ENCODE measurements at regions of chrX and their contacts with region 1.

Region 1: GRCh38 chrX:69088171-69088938 is 76.9 kb downstream of the PJA1 start:
- DNase-seq: no peak
- ATAC-seq: no peak
- H3K4me3 ChIP-seq: no peak overlapping the region
- H3K27ac ChIP-seq: no peak overlapping the region
- H3K4me1 ChIP-seq: no peaks in the 10 kb centered on the region
- H3K27me3 ChIP-seq: no peaks in the 10 kb centered on the region; a peak in 2 of 5 replicates
- CTCF ChIP-seq: no peak
- EP300 ChIP-seq: no peak
- POLR2A ChIP-seq: no peak
- RAD21 ChIP-seq: no peak

Region 2: DNA sequence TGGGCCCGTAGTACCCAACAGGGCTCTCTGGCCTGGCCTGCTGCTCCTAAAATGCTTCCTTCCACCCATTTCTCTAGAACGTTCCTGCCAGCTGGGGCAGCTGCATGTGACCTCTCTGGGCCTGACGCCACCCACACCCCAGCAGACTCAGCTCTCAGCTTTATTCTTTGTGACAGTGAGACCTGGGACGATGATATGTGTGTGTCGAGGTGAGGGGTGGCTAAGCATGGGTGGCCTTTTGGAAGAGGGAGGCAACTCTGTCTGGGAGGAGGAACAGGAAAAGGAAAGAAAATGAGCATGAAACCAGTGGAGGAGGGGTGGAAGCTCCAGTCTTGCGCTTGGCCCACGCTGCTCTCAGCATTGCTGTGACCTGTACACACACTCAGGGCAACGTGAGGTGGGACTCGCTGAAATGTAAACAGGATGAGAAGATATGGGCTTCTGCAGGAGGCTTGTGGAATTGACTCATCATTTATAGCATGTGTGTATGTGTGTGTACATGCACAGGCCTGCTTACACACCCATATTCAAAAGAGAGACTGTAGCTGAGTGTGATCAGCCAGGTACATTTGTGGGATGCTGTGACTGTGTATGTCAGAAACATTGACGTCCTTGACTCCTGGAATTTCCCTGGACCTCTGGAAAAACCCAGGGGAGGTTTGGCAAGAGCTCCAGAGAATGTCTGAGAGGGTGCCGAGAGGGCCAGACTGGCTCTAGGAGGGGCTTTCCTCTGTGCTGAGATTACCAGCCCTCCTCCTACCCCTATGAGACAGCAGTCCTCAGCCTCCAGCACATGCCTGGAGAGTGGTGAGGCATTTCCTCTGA is 61.0 kb before region 1 on chrX:
- CTCF ChIA-PET with region 1: no interaction called
- POLR2A ChIA-PET with region 1: no interaction called
- in situ Hi-C with region 1: no loop called
- intact Hi-C with region 1: no loop called
- DNase-seq: no peak
- ATAC-seq: no peak
- H3K4me3 ChIP-seq: no peak overlapping the region
- H3K27ac ChIP-seq: no peak overlapping the region
- H3K4me1 ChIP-seq: no peaks in the 10 kb centered on the region
- H3K27me3 ChIP-seq: peaks cover 0 to under 1% of the 10 kb centered on the region in 2 experiments; a peak in 1 of 5 replicates
- CTCF ChIP-seq: no peak
- EP300 ChIP-seq: no peak
- POLR2A ChIP-seq: no peak
- RAD21 ChIP-seq: no peak

Region 3: DNA sequence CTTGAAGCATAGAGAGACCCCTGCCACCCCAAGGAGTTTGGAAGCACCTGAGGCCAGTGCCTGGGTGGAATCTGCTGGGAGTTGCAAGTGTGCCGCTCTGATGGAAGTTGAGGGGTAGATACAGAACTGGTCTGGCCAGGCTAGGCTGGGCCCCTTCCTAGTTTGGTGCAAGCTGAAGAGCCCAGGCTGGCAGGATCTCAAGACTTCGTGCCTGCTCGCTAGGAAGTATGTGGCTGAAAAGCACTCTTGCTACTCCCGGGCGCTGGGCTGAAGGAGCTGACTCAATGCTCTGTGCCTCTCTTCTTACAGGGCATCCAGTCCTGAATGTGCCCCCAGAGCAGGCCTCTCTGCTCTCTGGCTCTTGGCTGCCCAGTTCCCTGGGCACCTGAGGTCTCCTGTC is 128.6 kb after region 1 on chrX:
- CTCF ChIA-PET with region 1: interaction called, 9 read pairs
- POLR2A ChIA-PET with region 1: no interaction called
- in situ Hi-C with region 1: loop called (anchors 10 kb)
- intact Hi-C with region 1: loop called (anchors 5 kb)
- DNase-seq: no peak
- ATAC-seq: no peak
- H3K4me3 ChIP-seq: no peak overlapping the region
- H3K27ac ChIP-seq: no peak overlapping the region
- H3K4me1 ChIP-seq: no peaks in the 10 kb centered on the region
- H3K27me3 ChIP-seq: peaks cover 0 to 7% of the 10 kb centered on the region in 2 experiments; a peak in 1 of 5 replicates
- CTCF ChIP-seq: no peak
- EP300 ChIP-seq: no peak
- POLR2A ChIP-seq: no peak
- RAD21 ChIP-seq: no peak